Upper lobe of right lung (tissue), 1 donor: ENCODE measurements at regions of chr15 and their contacts with region 1.

Region 1: DNA sequence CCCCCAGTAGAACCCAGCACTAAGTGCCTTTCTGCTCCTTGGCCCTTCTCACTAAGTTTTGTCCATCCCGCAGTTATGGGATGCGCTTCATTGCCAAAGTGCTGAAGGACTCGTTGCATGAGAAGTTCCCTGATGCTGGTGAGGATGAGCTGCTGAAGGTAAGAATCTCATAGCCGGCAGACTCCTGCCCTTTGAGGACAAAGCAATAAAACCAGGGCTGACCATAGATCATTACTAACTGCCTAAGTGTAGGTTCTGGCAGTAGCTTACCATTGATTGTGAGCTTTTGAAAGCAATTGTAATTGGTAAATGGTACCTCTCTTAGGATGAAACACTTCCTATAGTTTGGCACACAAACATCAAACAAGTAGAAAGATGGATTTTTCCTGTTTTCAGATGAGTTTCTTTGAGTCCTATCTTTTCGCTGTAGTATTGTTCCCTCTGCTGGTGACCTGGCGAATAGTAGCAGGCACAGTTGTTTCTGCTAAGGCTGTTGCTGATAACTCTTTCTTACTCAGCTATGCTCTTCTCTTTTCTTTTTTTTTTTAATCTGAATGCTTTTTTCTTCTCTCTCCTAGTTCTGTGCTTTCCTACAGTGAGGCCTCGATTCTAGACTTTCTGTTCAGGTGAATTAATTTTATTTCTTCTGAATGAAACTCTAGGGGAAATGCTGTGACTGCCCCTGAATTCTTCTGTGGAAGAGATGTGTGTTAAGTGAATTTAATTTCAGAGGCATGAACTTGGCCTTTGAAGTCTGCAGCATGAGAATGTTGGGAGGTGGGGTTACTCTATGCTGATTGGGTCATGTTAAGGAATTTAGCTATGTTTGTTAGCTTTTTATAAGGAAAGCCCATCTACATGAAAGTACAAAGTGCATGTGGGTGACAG is 47.4 kb upstream of the CRTC3 start:
- DNase-seq: no peak
- ATAC-seq: no peak
- H3K4me3 ChIP-seq: no peak overlapping the region
- H3K27ac ChIP-seq: no peak overlapping the region
- H3K4me1 ChIP-seq: peaks cover 13% of the 10 kb centered on the region
- H3K27me3 ChIP-seq: no peaks in the 10 kb centered on the region
- CTCF ChIP-seq: peak; percentile 65

Region 2: DNA sequence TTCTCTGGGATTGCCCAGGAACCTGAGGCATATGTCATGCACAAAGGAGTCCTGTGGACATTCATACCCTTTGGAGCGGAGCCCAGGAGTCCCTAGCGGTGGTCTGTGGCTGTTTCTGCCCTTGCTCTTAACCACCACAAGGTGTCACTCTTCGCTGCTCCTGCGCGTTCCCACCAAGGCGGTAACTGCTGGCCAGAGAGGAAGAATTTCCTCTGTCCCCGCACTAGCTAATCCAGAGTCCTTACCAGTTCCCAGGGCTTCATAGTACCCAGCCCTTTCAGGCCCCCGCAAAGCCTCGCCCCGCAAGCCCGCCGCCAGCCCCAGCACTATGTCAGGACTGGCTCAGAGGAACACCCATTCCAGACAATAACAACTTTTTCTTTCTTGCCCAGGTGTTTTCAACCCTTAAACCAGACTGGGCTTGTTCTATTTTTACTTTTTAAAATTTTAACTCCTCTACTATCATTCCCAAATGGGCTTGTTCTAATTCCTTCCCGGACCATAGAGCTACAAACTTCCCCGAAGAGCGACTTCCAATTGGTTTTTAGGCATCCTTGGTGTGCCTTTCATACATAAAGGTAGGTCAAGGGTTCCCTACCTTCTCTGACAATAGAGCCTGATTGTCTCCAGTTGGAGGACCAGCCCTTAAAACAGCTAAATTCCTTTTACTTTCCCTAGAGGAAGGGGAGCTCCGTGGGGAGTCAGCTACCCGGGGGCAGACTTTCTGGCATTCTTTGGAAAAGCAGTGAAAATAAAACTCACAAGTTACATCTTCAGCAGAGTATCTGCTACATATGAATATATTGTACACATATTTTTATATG is 162.1 kb before region 1 on chr15:
- intact Hi-C with region 1: loop called (anchors 10 kb)
- DNase-seq: peak; percentile 84
- ATAC-seq: peak; percentile 99
- H3K4me3 ChIP-seq: no peak overlapping the region
- H3K27ac ChIP-seq: no peak overlapping the region
- H3K4me1 ChIP-seq: peaks cover 27% of the 10 kb centered on the region
- H3K27me3 ChIP-seq: no peaks in the 10 kb centered on the region
- CTCF ChIP-seq: peak; percentile 97

Region 3: DNA sequence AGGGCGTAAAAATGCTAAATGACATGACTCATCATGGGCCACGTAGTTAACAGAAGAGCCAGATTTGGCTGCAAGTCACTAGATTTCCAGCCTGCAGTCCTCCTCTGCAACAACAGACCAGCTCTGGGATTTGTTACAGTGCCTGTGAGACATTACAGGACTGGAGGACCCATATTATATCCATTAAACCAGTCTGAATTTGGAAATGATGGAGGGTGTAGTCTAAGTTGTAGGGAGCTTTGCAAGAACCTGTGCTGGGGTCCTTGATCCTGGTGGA is 119.5 kb before region 1 on chr15:
- intact Hi-C with region 1: loop called (anchors 5 kb)
- DNase-seq: no peak
- ATAC-seq: no peak
- H3K4me3 ChIP-seq: no peak overlapping the region
- H3K27ac ChIP-seq: no peak overlapping the region
- H3K4me1 ChIP-seq: peaks cover 22% of the 10 kb centered on the region
- H3K27me3 ChIP-seq: no peaks in the 10 kb centered on the region
- CTCF ChIP-seq: no peak